ENCODE measurements at regions of chr2 and their contacts with region 1.

Region 1: DNA sequence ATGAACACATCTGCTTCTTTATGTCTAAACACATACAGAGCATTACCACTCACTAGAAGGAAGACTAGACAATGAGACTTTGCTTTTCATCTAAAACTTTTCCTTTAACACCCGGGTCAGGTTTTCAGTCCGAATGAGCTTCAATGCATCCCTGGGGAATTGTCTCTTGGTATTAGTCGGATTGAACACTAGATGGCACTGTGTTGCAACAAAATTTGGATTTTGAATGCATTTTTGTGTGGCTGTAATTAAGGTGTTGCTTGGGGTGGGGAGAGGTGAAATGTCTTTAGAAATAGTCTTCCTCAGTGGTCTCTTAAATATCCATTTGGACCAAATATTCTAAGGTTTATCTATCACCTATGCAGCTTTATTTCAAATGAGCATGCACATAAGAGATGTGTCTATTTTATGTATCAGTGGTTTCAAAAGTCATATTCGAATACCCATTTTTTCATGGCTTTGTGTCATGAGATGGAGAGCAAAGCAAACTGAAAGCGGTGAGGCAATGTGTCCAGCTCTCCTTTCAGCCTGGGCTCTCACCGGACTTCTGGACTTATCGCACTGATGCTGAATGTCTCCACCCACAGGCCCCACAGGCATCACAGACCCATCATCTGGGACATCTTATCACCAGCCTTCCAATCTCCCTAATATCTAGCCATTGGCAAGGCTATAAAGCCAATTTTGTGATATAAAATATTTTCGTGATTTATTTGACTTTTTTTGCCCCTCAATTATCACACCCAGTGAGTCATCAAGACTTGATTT is 510.3 kb downstream of the RNF144A start:
- DNase-seq: no peak
- ATAC-seq: peak; percentile 7
- H3K4me3 Mint-ChIP-seq: peak overlapping the region; percentile 24
- H3K27ac Mint-ChIP-seq: peak overlapping the region; percentile 74
- H3K4me1 Mint-ChIP-seq: peaks cover 41% of the 10 kb centered on the region
- H3K27me3 Mint-ChIP-seq: peaks cover 2% of the 10 kb centered on the region
- CTCF ChIP-seq: peak; percentile 92

Region 2: DNA sequence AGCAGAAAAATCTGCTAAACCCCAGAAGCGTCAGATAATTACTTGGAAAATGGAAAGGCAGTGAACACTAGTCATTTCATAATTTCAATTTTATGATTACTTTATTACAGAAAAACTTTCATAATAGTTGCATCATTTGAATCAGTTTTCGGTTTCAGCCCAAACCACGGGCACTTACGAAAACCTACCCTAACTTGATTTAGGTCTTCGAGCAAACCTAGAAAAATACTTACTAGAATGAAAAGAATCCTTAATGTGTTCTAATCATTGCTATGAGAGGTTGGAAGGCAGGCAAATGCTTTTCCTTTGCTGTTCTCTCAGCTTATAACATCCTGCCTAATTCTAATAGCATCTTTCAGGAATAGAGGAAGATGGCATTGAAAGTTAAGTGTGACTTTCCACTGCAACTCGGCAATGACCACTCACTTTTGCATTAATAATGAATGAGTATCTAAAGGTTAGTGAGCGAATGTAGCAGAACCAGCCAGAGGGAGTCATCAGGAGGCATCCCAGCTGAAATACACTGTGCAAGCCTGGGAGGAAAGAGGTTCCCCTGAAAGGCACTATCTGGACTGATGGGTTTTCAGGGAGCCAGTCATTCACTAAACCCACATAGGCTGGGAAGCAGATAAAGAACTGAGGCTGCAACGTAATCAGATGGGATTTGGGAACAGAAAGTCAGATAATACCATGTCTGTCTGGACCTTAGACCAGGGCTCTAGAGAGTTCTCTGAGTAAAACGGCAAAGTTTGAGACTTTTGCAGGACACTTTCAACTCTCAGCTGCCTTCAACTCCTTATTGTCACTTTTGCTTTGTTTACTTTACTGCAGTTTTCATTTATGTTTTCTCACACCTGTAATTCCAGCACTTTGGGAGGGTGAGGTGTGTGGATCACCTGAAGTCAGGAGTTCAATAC is 10.5 kb after region 1 on chr2:
- CTCF ChIA-PET with region 1: interaction called, 23 read pairs
- POLR2A ChIA-PET with region 1: interaction called, 70 read pairs
- intact Hi-C with region 1: no loop called
- DNase-seq: peak; percentile 77
- ATAC-seq: peak; percentile 44
- H3K4me3 Mint-ChIP-seq: peak overlapping the region; percentile 15
- H3K27ac Mint-ChIP-seq: peak overlapping the region; percentile 93
- H3K4me1 Mint-ChIP-seq: peaks cover 88% of the 10 kb centered on the region
- H3K27me3 Mint-ChIP-seq: no peaks in the 10 kb centered on the region
- CTCF ChIP-seq: no peak

Region 3: DNA sequence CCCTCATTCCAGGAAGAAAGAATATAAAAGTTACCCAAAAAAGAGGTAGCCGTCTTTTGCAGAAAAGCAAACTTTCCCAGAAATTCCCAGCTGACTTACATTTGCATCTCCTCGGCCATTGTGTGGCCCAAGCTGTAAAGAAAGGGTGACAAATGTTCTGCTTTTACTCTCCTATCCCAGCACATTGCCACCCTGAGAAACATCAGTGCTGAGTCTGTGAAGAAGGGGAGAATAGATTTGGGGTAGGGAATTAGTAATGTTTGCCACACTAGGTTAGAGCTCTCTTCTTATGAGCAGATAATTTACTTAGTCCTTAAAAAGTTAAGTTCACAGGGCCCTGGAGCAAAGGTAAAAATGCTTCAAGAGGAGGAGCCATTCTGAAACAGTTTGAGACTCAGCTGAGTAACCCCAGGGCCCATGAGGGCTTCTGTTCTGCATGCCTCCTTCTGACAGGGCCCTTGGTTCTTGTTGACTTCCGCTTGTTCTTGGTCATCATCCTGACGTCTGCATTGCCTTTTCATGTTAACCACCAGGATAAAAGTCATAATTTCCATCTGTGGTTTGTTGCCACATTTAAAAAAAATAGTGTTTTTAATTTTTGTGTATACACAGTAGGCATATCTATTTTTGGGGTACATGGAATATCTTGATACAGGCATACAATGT is 40.4 kb after region 1 on chr2:
- CTCF ChIA-PET with region 1: interaction called, 4 read pairs
- POLR2A ChIA-PET with region 1: interaction called, 5 read pairs
- intact Hi-C with region 1: loop called (anchors 5 kb)
- DNase-seq: peak; percentile 83
- ATAC-seq: peak; percentile 96
- H3K4me3 Mint-ChIP-seq: peak overlapping the region; percentile 45
- H3K27ac Mint-ChIP-seq: peak overlapping the region; percentile 98
- H3K4me1 Mint-ChIP-seq: peaks cover 58% of the 10 kb centered on the region
- H3K27me3 Mint-ChIP-seq: no peaks in the 10 kb centered on the region
- CTCF ChIP-seq: no peak

Region 4: GRCh38 chr2:7557376-7557775 is 129.9 kb after region 1 on chr2:
- CTCF ChIA-PET with region 1: interaction called, 10 read pairs
- POLR2A ChIA-PET with region 1: interaction called, 3 read pairs
- intact Hi-C with region 1: no loop called
- DNase-seq: no peak
- ATAC-seq: peak; percentile 60
- H3K4me3 Mint-ChIP-seq: no peak overlapping the region
- H3K27ac Mint-ChIP-seq: peak overlapping the region; percentile 77
- H3K4me1 Mint-ChIP-seq: peaks cover 43% of the 10 kb centered on the region
- H3K27me3 Mint-ChIP-seq: no peaks in the 10 kb centered on the region
- CTCF ChIP-seq: no peak

Region 5: GRCh38 chr2:7593360-7593759 is 165.9 kb after region 1 on chr2:
- CTCF ChIA-PET with region 1: interaction called, 10 read pairs
- POLR2A ChIA-PET with region 1: interaction called, 5 read pairs
- intact Hi-C with region 1: no loop called
- DNase-seq: no peak
- ATAC-seq: peak; percentile 8
- H3K4me3 Mint-ChIP-seq: no peak overlapping the region
- H3K27ac Mint-ChIP-seq: no peak overlapping the region
- H3K4me1 Mint-ChIP-seq: peaks cover 28% of the 10 kb centered on the region
- H3K27me3 Mint-ChIP-seq: no peaks in the 10 kb centered on the region
- CTCF ChIP-seq: no peak

Region 6: GRCh38 chr2:7725171-7725849 is 297.8 kb after region 1 on chr2:
- CTCF ChIA-PET with region 1: interaction called, 29 read pairs
- POLR2A ChIA-PET with region 1: interaction called, 37 read pairs
- intact Hi-C with region 1: no loop called
- DNase-seq: peak; percentile 46
- ATAC-seq: peak; percentile 72
- H3K4me3 Mint-ChIP-seq: peak overlapping the region; percentile 81
- H3K27ac Mint-ChIP-seq: peak overlapping the region; percentile 90
- H3K4me1 Mint-ChIP-seq: peaks cover 37% of the 10 kb centered on the region
- H3K27me3 Mint-ChIP-seq: no peaks in the 10 kb centered on the region
- CTCF ChIP-seq: no peak

Measured in activated CD8-positive, alpha-beta T cell treated with anti-CD3 and anti-CD28 coated beads for 36 hours (primary cell).